Mammary epithelial cell (primary cell): ENCODE measurements at regions of chr21 and their contacts with region 1.

Region 1: DNA sequence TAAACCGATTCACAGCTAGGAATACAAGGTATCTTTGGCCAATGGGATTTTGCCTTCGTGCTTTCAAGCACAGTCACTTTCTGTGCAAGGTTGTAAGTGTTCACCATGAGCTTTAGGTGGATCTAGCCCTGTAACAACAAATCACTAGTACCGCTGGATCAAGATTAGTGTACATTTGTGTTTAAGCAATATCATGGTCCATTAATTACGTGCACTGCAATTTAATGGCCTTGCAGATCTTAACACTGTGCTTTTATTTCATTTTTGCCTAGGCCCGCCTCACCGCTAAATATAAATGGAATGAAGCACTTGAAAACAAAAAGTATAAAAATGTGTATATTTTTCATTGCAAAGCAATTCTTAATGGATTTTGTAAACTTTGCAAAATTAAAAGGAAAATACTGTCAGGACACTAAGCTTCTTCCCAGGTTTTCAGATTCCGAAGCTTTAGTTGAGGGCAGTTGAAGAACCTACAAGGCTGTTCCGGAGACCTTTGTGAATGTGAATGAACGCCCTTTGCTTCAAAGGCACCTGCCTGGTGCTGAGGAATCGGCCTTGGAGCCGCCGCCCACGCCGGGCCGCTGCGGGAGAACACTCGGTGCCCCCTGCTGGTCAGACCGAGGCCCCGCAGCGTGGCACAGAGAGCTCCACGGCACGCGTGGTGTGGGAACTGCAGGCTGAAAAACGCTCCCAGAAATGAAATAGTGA is 460.9 kb downstream of the DSCAM start:
- DNase-seq: peak; percentile 41
- H3K4me3 ChIP-seq: peak overlapping the region in 1 of 3 experiments; percentile 29
- H3K27ac ChIP-seq: no peak overlapping the region
- H3K4me1 ChIP-seq: no peaks in the 10 kb centered on the region
- H3K27me3 ChIP-seq: no peaks in the 10 kb centered on the region
- CTCF ChIP-seq: peak; percentile 86 to 99

Region 2: DNA sequence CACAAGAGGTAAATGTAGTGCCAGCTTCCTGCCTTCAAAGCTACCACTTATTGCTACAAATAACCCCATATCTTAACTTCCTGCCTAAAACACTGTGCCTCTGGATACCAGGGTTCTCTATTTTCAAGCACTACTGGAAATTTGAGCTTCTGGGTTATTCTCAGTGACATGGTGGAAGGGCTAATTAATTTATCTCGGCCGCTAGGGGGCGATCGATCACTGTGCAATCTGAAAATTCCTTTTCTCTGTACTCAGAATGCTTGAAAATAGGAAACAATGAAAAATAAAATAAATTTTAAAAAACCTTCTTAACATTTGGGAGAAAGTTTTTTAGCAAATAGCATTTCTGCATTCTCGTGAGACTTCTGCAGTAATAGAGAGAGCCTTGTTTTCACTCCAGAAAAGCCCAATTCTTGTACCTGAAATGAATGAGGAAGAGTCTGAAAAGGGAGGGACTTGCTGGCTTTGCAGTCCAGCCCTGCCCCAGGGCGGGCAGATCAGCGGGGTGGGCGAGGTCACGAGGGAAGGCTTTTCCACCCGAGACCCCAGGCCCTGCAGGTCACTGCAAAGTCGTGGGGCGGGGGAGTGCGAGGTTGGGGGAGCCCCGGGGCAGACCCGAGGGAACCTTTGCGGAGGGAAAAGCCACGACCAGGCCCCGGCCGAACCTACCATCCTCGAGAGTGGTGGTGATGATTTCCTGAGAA is 242.1 kb before region 1 on chr21:
- CTCF ChIA-PET with region 1: interaction called, 6 read pairs
- dilution Hi-C with region 1: loop called (anchors 25 kb)
- in situ Hi-C with region 1: no loop called
- intact Hi-C with region 1: loop called (anchors 1 kb)
- DNase-seq: peak; percentile 24
- H3K4me3 ChIP-seq: no peak overlapping the region
- H3K27ac ChIP-seq: no peak overlapping the region
- H3K4me1 ChIP-seq: no peaks in the 10 kb centered on the region
- H3K27me3 ChIP-seq: no peaks in the 10 kb centered on the region
- CTCF ChIP-seq: peak; percentile 63

Region 3: DNA sequence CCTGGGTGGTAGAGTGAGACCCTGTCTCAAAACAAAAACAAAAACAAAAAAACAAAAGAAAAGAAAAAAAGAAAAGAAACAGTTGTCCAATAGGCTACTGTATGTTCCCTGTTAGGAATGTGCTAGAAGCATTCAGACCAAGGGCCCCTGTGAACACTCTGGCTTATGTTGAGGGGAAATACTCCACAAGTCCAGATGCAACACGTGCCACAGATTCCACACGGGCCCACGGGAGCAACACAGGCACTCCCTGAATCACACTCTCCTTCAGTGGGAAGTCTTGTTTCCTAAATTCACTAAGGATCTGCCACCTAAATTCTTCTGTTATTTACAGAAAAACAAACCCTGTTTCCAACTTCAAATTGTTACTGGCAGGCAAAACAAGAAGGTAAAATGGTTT is 227.7 kb before region 1 on chr21:
- CTCF ChIA-PET with region 1: no interaction called
- dilution Hi-C with region 1: no loop called
- in situ Hi-C with region 1: loop called (anchors 10 kb)
- intact Hi-C with region 1: no loop called
- DNase-seq: no peak
- H3K4me3 ChIP-seq: no peak overlapping the region
- H3K27ac ChIP-seq: no peak overlapping the region
- H3K4me1 ChIP-seq: no peaks in the 10 kb centered on the region
- H3K27me3 ChIP-seq: no peaks in the 10 kb centered on the region
- CTCF ChIP-seq: no peak

Region 4: DNA sequence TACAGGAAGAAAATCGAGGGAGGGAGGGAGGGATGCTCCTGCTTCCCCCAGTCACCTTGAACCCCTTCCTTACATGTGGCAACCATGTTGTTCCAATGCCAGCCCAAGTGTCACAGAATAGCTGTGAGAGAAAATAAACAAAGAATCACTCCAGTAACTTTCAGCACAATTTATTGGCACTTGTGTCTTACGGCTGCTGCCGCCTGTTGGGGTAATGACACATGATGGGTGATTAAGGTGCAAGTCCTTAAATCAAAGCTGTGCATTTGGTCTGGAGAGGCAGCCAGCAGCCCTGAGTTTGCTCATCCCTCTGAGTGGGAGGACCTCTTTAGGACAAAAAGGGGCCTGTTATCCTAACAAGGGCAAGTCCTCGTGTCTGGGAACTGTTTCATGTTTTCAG is 141.1 kb before region 1 on chr21:
- CTCF ChIA-PET with region 1: no interaction called
- dilution Hi-C with region 1: no loop called
- in situ Hi-C with region 1: no loop called
- intact Hi-C with region 1: no loop called
- DNase-seq: no peak
- H3K4me3 ChIP-seq: no peak overlapping the region
- H3K27ac ChIP-seq: no peak overlapping the region
- H3K4me1 ChIP-seq: no peaks in the 10 kb centered on the region
- H3K27me3 ChIP-seq: no peaks in the 10 kb centered on the region
- CTCF ChIP-seq: no peak

Region 5: GRCh38 chr21:40489001-40489400 is 103.0 kb after region 1 on chr21:
- CTCF ChIA-PET with region 1: no interaction called
- dilution Hi-C with region 1: loop called (anchors 5 kb)
- in situ Hi-C with region 1: no loop called
- intact Hi-C with region 1: no loop called
- DNase-seq: no peak
- H3K4me3 ChIP-seq: no peak overlapping the region
- H3K27ac ChIP-seq: no peak overlapping the region
- H3K4me1 ChIP-seq: no peaks in the 10 kb centered on the region
- H3K27me3 ChIP-seq: no peaks in the 10 kb centered on the region
- CTCF ChIP-seq: no peak

Region 6: DNA sequence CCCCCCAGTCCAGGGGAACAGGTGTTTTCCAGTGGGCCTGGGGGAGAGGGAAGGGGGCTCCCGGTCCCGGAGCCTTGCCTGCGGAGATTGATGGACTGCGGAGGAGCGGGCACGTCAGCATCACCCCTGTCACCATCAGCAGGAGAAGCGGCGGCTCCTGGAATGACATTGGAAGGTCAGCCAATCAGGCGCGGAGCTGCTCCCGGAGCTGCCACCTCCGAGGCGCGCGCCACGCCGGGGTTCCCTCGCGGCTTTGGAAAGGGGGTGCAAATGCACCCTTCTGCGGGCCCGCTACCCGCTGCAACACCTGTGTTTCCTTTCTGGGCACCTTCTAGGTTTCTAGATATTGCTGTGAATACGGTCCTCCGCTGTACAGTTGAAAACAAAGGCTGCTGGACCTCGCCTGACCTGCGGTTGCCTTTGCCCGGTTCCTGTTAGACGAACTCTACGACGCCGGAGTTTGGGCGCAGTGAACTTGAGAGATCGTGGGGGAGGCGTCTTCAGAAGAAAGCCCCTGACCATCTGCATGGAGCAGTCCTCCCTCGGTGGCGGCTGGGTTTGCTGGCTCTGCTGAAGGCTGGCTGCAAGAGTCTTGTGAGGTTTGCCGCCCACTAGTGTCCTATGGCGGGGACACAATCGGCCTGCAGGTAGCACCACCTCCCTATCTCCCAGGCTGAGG is 455.6 kb after region 1 on chr21:
- CTCF ChIA-PET with region 1: no interaction called
- dilution Hi-C with region 1: no loop called
- in situ Hi-C with region 1: no loop called
- intact Hi-C with region 1: no loop called
- DNase-seq: peak; percentile 42
- H3K4me3 ChIP-seq: peak overlapping the region; percentile 44 to 56 (median 55)
- H3K27ac ChIP-seq: peak overlapping the region; percentile 17
- H3K4me1 ChIP-seq: peaks cover 74% of the 10 kb centered on the region
- H3K27me3 ChIP-seq: no peaks in the 10 kb centered on the region
- CTCF ChIP-seq: peak; percentile 59 to 91

Region 7: GRCh38 chr21:40952551-40953274 is 566.7 kb after region 1 on chr21:
- CTCF ChIA-PET with region 1: no interaction called
- dilution Hi-C with region 1: no loop called
- in situ Hi-C with region 1: no loop called
- intact Hi-C with region 1: no loop called
- DNase-seq: no peak
- H3K4me3 ChIP-seq: no peak overlapping the region
- H3K27ac ChIP-seq: no peak overlapping the region
- H3K4me1 ChIP-seq: peaks cover 15% of the 10 kb centered on the region
- H3K27me3 ChIP-seq: no peaks in the 10 kb centered on the region
- CTCF ChIP-seq: no peak